Caki2 (cell line): ENCODE measurements at regions of chr14 and their contacts with region 1.

Region 1: DNA sequence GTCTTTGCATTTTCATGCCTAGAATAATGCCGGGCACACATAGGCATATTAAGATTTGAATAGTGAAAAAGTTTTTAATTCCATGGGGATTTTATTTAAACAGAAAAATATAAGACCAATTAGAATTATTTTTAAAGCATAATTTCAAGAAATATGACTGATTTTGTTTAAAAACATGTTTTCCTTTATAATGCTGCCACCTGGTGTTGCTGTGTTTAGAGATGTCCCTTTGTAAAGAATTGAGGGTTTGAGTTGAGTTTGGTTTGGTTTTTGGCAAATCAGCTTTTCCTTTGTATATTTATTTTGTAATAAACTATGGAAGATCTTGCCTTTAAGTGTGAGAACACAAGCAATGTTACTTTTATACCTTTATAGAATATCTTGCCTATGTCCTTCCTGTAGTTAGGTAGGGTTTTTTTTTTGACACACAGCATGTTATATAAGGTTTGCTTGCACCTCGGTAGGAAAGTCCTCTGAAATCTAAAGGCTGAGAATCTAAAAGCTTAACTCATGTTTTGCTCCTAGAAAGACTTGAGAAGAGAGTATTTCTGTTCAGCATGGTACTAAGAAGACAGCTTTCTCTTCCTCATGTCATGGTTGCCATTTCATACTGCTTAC is 31.4 kb upstream of the SNAPC1 start:
- DNase-seq: no peak

Region 2: GRCh38 chr14:61475316-61475715 is 255.5 kb before region 1 on chr14:
- in situ Hi-C with region 1: loop called (anchors 25 kb)
- DNase-seq: peak; percentile 31

Region 3: GRCh38 chr14:61671082-61671481 is 59.8 kb before region 1 on chr14:
- in situ Hi-C with region 1: no loop called
- DNase-seq: no peak

Region 4: GRCh38 chr14:61973868-61974321 is 243.0 kb after region 1 on chr14:
- in situ Hi-C with region 1: no loop called
- DNase-seq: no peak

Region 5: DNA sequence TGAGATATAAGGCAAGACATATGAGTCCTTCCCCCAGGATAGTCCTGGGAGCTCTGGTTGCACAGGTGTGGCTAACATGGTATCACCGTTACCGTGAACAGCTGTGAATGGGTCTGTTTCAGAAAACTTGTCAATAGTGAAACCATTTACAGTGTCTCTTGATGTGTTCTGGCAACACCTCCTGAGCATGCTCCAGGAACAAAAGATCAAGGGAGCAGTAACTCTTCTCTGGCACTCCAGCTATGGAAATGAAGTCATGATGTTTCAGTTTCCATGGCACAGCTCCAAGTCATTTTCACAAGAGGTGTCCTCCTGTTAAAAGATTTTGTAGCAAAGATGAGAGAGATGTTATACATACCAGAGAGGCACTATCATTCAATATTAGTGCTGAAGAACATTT is 285.1 kb after region 1 on chr14:
- in situ Hi-C with region 1: no loop called
- DNase-seq: no peak